Head of caudate nucleus (tissue), 42 donors: ENCODE measurements at regions of chr1 and their contacts with region 1.

Region 1: GRCh38 chr1:182962554-182963115 is 9.7 kb upstream of the SHCBP1L start:
- DNase-seq: peak in 38 of 42 donors; percentile 23 to 87 (median 60)

Region 2: DNA sequence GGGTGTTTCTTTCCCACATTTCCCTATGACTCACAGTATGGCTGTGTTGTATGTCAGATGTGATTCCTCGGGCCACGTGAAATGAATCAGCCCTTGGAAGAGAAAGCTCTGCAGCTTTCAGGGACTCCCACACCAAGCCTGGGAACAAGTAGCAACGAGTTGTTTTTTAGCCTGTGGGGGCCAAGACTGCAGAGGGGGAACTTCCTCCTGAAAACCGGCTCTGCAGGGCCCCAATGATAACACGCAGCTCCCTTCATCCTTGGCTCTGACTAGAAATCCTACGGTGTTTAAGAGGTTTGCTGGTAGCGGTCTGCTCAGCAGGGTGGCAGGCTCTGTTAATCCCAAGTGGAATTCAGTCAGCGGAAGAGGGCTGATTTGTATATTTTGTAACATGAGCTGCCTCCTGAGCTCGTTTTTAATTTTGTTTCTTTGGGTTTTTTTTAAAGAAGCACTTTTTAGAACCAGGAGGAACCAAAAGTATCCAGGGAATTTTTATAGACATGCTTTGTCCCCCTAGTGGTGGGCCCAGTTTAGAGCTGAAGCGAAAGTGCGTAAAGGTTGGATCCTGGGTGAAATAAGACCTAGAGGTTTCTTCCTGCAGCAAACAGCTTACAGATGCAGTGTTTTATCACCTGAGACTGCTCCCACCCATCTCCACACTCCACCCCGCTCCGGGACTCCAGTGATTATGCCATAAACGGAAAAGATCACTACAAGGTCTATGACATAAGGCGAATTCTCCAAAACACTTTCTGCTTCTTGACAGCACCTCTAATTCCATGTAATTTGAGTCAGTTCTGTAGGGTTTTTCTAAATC is 272.2 kb after region 1 on chr1:
- intact Hi-C with region 1: loop called (anchors 10 kb)
- DNase-seq: peak; percentile 25 to 91 (median 64)